ENCODE measurements at regions of chr4 and their contacts with region 1.

Region 1: DNA sequence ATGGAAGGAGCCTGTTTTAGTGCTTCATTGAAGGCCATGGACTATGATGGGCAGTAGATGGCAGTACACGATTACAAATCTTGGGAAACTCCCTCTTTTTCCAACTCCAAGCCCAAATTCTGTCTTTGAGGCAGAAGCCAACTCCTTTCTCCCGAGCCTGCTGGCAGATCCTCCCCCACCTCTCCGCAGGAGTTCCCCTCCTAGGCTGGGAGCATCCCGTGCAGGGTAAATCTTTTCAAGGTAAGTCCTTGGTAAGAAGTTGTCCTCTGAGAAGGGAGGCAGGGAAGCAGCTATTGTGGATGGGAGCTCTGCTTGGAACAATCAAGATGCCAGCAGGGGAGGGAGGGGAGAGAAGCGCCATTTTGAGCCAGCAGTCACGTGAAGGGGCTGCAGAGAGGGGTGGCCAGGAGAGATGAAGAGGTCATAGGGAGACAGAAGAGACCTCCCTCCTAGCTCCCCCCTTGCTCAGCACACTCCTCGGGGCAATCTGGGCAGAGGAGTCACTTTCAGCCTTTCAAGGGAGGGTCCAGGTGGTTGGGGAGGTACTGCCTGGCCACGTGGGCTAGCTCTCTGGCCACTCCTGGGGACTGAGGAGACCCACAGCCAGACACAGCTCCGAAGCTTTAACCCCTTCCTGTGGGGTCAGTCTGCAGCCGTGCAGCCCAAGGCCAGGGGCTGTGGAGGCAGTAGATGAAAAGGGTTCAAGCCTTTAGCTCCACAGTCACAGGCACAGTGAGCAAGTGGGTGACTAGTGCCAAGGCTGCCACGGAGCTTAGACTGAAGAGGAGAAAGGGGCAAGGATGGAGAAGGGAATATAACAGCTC is 9.6 kb downstream of the CC2D2A start:
- DNase-seq: peak; percentile 89
- ATAC-seq: peak; percentile 87
- H3K4me3 ChIP-seq: peak overlapping the region; percentile 48
- H3K27ac ChIP-seq: peak overlapping the region; percentile 81
- H3K4me1 ChIP-seq: peaks cover 9% of the 10 kb centered on the region
- H3K27me3 ChIP-seq: no peaks in the 10 kb centered on the region
- CTCF ChIP-seq: peak; percentile 88
- POLR2A ChIP-seq: peak; percentile 48
- RAD21 ChIP-seq: peak; percentile 92

Region 2: DNA sequence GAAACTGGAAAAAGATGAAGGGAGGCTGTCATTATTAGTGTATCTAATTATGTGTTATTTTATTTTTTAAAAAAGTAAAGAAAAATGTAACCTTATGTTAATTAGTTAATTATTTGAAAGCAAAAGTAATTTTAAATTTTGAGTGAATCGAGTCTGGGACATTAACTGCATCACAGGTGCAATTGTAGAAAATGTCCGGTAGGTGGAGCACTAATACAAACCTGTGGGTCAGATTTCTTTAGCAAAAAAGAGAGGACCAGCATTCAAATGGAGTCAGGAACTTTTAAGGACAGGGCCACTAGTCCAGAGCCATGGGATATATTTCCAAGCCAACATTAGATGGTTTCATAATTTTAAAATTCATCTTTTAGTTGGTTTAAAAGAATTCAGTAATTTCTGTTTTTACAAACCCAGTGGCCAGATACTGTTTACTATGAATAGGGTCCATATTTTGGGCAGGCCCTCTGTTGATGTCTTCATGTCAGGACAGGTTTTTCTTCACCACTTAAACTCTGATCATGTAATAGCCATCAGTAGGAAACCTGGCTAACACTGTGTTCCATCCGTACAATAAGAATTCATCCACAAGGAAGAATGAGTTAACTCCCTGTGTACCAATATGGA is 250.7 kb after region 1 on chr4:
- CTCF ChIA-PET with region 1: no interaction called
- POLR2A ChIA-PET with region 1: no interaction called
- dilution Hi-C with region 1: no loop called
- in situ Hi-C with region 1: no loop called
- intact Hi-C with region 1: loop called (anchors 2 kb)
- DNase-seq: peak; percentile 53
- ATAC-seq: peak; percentile 88
- H3K4me3 ChIP-seq: no peak overlapping the region
- H3K27ac ChIP-seq: no peak overlapping the region
- H3K4me1 ChIP-seq: 0 out of 2 replicates have a peak, but pooled peaks cover 2% of the 10 kb centered on the region
- H3K27me3 ChIP-seq: no peaks in the 10 kb centered on the region
- CTCF ChIP-seq: peak; percentile 83
- POLR2A ChIP-seq: no peak
- RAD21 ChIP-seq: peak; percentile 69

Region 3: DNA sequence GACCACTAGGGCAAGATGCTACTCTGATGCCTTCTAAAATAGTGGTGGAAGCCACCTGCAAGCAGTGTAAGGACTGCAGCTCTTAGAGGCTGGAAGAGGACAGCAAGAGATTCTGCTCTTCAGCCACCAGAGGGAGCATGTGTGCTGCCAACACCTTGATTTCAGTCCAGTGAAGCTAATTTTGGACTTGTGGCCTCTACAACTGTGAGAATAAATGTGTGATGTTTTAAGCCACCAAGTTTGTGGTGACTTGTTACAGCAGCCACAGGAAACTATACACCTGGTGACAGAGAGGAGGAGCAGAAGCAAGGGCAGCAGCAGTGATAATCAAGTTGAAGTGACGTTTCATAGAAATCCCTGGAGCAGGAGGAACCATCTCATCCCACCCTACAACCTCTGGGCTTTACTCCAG is 403.4 kb after region 1 on chr4:
- CTCF ChIA-PET with region 1: interaction called, 6 read pairs
- POLR2A ChIA-PET with region 1: no interaction called
- dilution Hi-C with region 1: no loop called
- in situ Hi-C with region 1: loop called (anchors 10 kb)
- intact Hi-C with region 1: loop called (anchors 1 kb)
- DNase-seq: peak; percentile 82
- ATAC-seq: peak; percentile 96
- H3K4me3 ChIP-seq: no peak overlapping the region
- H3K27ac ChIP-seq: no peak overlapping the region
- H3K4me1 ChIP-seq: no peaks in the 10 kb centered on the region
- H3K27me3 ChIP-seq: peaks cover 18% of the 10 kb centered on the region
- CTCF ChIP-seq: peak; percentile 94
- POLR2A ChIP-seq: peak; percentile 36; the same call in 1 of the 2 replicates
- RAD21 ChIP-seq: peak; percentile 97

Region 4: GRCh38 chr4:15956179-15956850 is 477.0 kb after region 1 on chr4:
- CTCF ChIA-PET with region 1: interaction called, 7 read pairs
- POLR2A ChIA-PET with region 1: no interaction called
- dilution Hi-C with region 1: no loop called
- in situ Hi-C with region 1: no loop called
- intact Hi-C with region 1: loop called (anchors 1 kb)
- DNase-seq: peak; percentile 45
- ATAC-seq: peak; percentile 91
- H3K4me3 ChIP-seq: no peak overlapping the region
- H3K27ac ChIP-seq: no peak overlapping the region
- H3K4me1 ChIP-seq: no peaks in the 10 kb centered on the region
- H3K27me3 ChIP-seq: peaks cover 14% of the 10 kb centered on the region
- CTCF ChIP-seq: peak; percentile 96
- POLR2A ChIP-seq: no peak
- RAD21 ChIP-seq: peak; percentile 98

Region 5: GRCh38 chr4:16205298-16206164 is 726.2 kb after region 1 on chr4:
- CTCF ChIA-PET with region 1: no interaction called
- POLR2A ChIA-PET with region 1: no interaction called
- dilution Hi-C with region 1: no loop called
- in situ Hi-C with region 1: loop called (anchors 25 kb)
- intact Hi-C with region 1: no loop called
- DNase-seq: no peak
- ATAC-seq: no peak
- H3K4me3 ChIP-seq: no peak overlapping the region
- H3K27ac ChIP-seq: no peak overlapping the region
- H3K4me1 ChIP-seq: no peaks in the 10 kb centered on the region
- H3K27me3 ChIP-seq: no peaks in the 10 kb centered on the region
- CTCF ChIP-seq: peak; percentile 49
- POLR2A ChIP-seq: no peak
- RAD21 ChIP-seq: peak; percentile 29; the same call in 1 of the 2 replicates